ENCODE measurements at regions of chr17 and their contacts with region 1.

Region 1: GRCh38 chr17:40615295-40615988 is 32.2 kb downstream of the SMARCE1 start:
- DNase-seq: peak; percentile 73
- H3K4me3 Mint-ChIP-seq: no peak overlapping the region
- H3K27ac Mint-ChIP-seq: no peak overlapping the region
- H3K4me1 Mint-ChIP-seq: no peaks in the 10 kb centered on the region
- H3K27me3 Mint-ChIP-seq: peaks cover 55% of the 10 kb centered on the region
- CTCF ChIP-seq: peak; percentile 75

Region 2: DNA sequence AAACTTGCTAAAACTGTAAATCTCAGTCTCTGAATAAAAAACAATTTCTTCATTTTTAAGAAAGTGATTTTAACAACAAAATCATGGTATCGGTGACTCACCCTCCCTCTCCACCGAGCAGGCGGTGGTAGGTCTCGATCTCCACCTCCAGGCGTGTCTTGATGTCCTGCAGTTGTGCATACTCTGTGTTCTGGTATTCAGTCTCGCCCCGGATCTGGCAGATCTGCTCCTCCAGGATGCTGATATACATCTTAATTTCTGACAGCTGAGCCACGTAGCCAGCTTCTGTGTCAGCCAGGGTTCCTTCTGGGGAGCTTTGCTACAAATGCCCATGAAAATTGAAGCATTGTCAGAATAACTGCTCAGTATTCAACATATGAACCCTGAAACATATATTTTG is 103.5 kb after region 1 on chr17:
- CTCF ChIA-PET with region 1: interaction called, 5 read pairs
- POLR2A ChIA-PET with region 1: no interaction called
- intact Hi-C with region 1: loop called (anchors 2 kb)
- DNase-seq: peak; percentile 26
- H3K4me3 Mint-ChIP-seq: no peak overlapping the region
- H3K27ac Mint-ChIP-seq: no peak overlapping the region
- H3K4me1 Mint-ChIP-seq: no peaks in the 10 kb centered on the region
- H3K27me3 Mint-ChIP-seq: no peaks in the 10 kb centered on the region
- CTCF ChIP-seq: no peak

Region 3: GRCh38 chr17:40726919-40727318 is 111.5 kb after region 1 on chr17:
- CTCF ChIA-PET with region 1: interaction called, 3 read pairs
- POLR2A ChIA-PET with region 1: no interaction called
- intact Hi-C with region 1: loop called (anchors 1 kb)
- DNase-seq: peak; percentile 30
- H3K4me3 Mint-ChIP-seq: no peak overlapping the region
- H3K27ac Mint-ChIP-seq: no peak overlapping the region
- H3K4me1 Mint-ChIP-seq: no peaks in the 10 kb centered on the region
- H3K27me3 Mint-ChIP-seq: peaks cover 22% of the 10 kb centered on the region
- CTCF ChIP-seq: peak; percentile 42

Region 4: GRCh38 chr17:40791787-40792436 is 176.5 kb after region 1 on chr17:
- CTCF ChIA-PET with region 1: interaction called, 68 read pairs
- POLR2A ChIA-PET with region 1: interaction called, 7 read pairs
- intact Hi-C with region 1: loop called (anchors 1 kb)
- DNase-seq: peak; percentile 49
- H3K4me3 Mint-ChIP-seq: no peak overlapping the region
- H3K27ac Mint-ChIP-seq: no peak overlapping the region
- H3K4me1 Mint-ChIP-seq: no peaks in the 10 kb centered on the region
- H3K27me3 Mint-ChIP-seq: peaks cover 15% of the 10 kb centered on the region
- CTCF ChIP-seq: peak; percentile 56

Measured in MCF 10A (cell line).